ENCODE measurements at regions of chr3 and their contacts with region 1.

Region 1: DNA sequence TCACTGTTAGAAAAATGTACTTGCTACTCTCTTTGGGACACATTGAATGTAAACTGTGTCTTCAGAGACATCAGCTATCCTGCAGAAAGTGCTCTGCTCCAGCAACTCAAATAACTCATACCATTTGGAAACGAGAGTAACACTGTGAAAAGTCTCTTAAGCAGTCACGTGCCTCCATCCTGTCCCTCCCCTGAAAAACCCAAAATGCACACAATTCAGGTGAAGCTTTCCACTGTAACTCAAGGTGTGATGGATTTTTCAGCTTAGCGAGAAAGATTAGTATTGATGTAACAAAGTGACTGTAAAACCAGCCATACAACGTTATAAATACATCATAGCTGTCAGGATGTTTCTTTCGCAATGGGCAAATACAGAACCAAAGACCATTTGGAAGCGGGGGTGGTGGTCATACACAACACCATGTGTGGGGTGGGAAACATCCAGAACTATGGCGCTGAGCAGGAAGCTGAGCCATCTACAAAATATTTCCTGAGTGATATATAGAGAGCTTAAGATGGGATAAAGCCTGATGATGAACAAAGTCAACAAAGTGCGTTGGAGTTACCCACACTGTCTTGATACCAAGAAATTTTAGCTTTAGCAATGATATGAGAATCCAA is 332.3 kb downstream of the FOXP1 start:
- DNase-seq: no peak
- H3K4me3 Mint-ChIP-seq: no peak overlapping the region
- H3K27ac Mint-ChIP-seq: peak overlapping the region; percentile 39
- H3K4me1 Mint-ChIP-seq: peaks cover 79% of the 10 kb centered on the region
- H3K27me3 Mint-ChIP-seq: no peaks in the 10 kb centered on the region

Region 2: DNA sequence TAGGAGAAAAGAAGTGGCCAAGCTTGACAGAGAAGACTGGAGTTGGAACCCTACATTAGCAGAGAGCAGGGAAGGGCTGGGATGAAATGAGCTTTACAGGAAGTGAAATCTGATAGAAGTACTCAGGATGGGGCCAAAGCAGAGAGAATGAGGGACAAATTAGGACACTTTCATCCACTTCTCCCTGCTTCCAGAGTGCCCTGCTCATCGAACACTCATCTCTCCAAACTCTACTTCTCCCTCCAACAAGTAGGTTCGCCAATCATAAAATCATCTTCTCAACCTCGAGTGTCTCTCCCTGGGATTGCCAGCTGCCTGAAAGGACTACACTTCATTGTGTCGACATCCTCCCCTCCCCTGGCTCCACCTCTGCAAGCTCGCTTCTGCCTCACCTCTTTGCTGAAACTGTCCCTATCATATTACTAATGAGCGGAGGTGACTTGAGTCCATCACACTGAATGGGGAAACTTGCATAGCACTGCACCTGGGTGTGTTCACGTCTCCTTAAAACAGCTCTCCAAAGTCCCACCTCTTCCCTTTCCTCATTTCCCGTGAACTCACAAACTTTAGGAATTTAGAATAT is 33.5 kb before region 1 on chr3:
- CTCF ChIA-PET with region 1: no interaction called
- intact Hi-C with region 1: no loop called
- DNase-seq: no peak
- H3K4me3 Mint-ChIP-seq: no peak overlapping the region
- H3K27ac Mint-ChIP-seq: peak overlapping the region; percentile 33
- H3K4me1 Mint-ChIP-seq: peaks cover 66% of the 10 kb centered on the region
- H3K27me3 Mint-ChIP-seq: no peaks in the 10 kb centered on the region

Region 3: GRCh38 chr3:71264840-71265239 is 13.6 kb after region 1 on chr3:
- CTCF ChIA-PET with region 1: interaction called, 5 read pairs
- intact Hi-C with region 1: loop called (anchors 1 kb)
- DNase-seq: peak; percentile 35
- H3K4me3 Mint-ChIP-seq: peak overlapping the region; percentile 20
- H3K27ac Mint-ChIP-seq: peak overlapping the region; percentile 28
- H3K4me1 Mint-ChIP-seq: peaks cover 65% of the 10 kb centered on the region
- H3K27me3 Mint-ChIP-seq: no peaks in the 10 kb centered on the region

Region 4: GRCh38 chr3:71779674-71780377 is 528.6 kb after region 1 on chr3:
- CTCF ChIA-PET with region 1: no interaction called
- intact Hi-C with region 1: no loop called
- DNase-seq: no peak
- H3K4me3 Mint-ChIP-seq: no peak overlapping the region
- H3K27ac Mint-ChIP-seq: no peak overlapping the region
- H3K4me1 Mint-ChIP-seq: peaks cover 7% of the 10 kb centered on the region
- H3K27me3 Mint-ChIP-seq: peaks cover 31% of the 10 kb centered on the region